Activated B cell treated with CpG ODN at 0.5 μM for 24 hours (primary cell): ENCODE measurements at regions of chr1 and their contacts with region 1.

Region 1: DNA sequence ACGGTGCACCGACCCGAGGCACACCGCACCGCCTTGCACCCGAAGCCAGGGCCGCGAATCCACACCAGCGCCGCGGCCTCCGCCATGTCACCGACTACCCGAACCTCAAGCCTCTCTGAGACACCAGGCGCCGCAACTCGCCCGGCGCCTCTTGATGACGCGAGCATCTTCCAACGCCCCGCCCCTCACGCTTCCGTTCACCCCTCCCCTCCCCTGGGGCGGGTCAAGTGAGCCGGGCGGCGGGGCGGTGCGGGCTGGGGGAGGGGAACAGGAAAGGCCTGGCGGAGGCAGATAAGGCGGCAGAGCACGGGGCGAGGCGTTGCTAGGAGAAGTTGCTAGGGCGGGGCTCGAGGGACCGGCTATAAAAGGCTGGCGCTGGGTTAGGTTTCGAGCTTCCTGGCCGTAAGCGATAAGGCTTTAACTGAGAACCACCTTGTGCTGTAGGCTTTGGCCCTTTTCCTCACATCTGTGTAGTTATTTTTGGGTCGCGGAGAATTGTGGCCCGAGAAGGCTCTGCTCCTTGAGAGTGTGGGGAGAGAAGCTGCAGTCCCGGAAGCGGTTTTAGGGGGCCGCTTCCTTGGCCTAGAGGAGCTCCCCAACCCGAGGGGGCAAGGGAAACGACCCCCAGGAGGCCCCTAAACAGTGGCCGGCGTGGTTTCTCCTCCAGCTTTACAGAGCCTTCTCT is at the start of gene SDE2:
- DNase-seq: peak; percentile 99
- ATAC-seq: peak; percentile 82
- H3K4me3 Mint-ChIP-seq: peak within 1 kb of the TSS; percentile 100
- H3K27ac Mint-ChIP-seq: peak within 1 kb of the TSS; percentile 100
- H3K4me1 Mint-ChIP-seq: peaks cover 81% of the 10 kb centered on the region
- H3K27me3 Mint-ChIP-seq: no peaks in the 10 kb centered on the region
- CTCF ChIP-seq: no peak
- total RNA-seq, gene SDE2: 21.1 and 21.8 TPM in 2 replicates

Region 2: GRCh38 chr1:225467193-225468020 is 532.0 kb before region 1 on chr1:
- CTCF ChIA-PET with region 1: interaction called, 3 read pairs
- POLR2A ChIA-PET with region 1: interaction called, 34 read pairs
- intact Hi-C with region 1: loop called (anchors 1 kb)
- DNase-seq: peak; percentile 75
- ATAC-seq: peak; percentile 86
- H3K4me3 Mint-ChIP-seq: peak overlapping the region; percentile 90
- H3K27ac Mint-ChIP-seq: peak overlapping the region; percentile 98
- H3K4me1 Mint-ChIP-seq: peaks cover 40% of the 10 kb centered on the region
- H3K27me3 Mint-ChIP-seq: no peaks in the 10 kb centered on the region
- CTCF ChIP-seq: no peak

Region 3: DNA sequence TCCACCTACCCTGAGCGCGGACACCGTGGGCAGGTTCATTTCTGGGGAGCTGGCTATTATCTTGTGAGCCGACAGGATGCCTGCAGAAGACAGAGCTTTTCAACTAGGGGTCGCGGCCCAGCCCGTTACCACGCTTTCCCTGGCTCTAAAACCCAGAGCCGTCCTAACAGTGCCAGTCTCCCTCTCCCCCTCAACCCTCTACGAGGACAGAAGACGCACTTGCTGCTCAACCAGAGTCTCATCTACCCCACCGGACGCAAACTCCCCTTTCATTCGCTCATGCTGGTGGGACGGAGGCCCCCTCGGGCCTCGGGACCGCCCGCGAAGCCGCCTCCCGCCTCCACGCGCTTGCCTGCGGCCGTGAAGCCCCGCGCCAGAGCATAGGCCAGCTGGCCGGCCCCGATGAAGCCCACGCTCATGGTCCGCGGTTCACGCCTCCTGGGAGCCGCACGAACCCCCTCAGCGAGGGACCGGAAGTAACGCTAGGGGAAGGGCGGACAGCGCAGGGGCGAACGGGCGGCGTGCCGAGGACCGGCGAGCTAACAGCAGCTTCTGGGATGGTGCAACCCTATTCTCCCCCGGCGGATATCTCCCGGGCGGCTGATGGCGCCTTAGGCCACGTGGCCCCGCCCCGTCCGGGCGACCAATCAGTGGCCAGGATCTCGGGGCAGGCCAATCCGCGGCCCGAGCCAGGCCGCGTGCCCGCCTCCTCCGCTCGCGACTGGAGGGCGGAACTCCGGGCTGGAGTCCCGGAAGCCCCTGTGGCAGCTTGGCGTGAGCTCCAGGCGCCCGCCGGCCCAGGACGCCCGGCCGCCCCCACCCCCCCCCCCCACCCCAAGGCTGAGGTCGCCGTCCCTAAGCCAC is 75.4 kb before region 1 on chr1 and contains the start of gene PYCR2:
- CTCF ChIA-PET with region 1: no interaction called
- POLR2A ChIA-PET with region 1: interaction called, 14 read pairs
- intact Hi-C with region 1: loop called (anchors 1 kb)
- DNase-seq: peak; percentile 93
- ATAC-seq: peak; percentile 98
- H3K4me3 Mint-ChIP-seq: peak within 1 kb of the TSS; percentile 95
- H3K27ac Mint-ChIP-seq: peak within 1 kb of the TSS; percentile 88
- H3K4me1 Mint-ChIP-seq: peaks cover 20% of the 10 kb centered on the region
- H3K27me3 Mint-ChIP-seq: no peaks in the 10 kb centered on the region
- CTCF ChIP-seq: no peak
- total RNA-seq, gene PYCR2: 109 and 110 TPM in 2 replicates

Region 4: DNA sequence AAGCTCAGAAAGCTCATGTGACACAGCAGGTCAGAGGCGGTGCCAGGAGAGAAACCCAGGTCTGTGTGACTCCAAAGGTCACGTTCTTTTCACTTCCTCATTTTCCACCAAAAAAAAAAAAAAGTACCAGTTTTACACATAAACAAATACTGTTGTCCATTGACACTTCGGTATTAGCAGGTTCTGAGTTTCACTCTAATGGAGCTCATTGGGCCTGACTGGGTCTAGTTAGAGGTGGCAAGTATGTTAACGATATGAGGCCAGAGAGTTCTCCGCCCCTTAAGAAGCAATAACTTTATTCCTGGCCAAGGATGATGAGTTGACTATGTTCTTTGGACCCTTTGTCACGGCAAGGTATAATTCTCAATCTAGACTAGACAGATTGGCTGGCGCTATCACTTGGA is 29.7 kb after region 1 on chr1:
- CTCF ChIA-PET with region 1: interaction called, 7 read pairs
- POLR2A ChIA-PET with region 1: interaction called, 139 read pairs
- intact Hi-C with region 1: loop called (anchors 1 kb)
- DNase-seq: peak; percentile 39
- ATAC-seq: peak; percentile 86
- H3K4me3 Mint-ChIP-seq: peak overlapping the region; percentile 68
- H3K27ac Mint-ChIP-seq: peak overlapping the region; percentile 94
- H3K4me1 Mint-ChIP-seq: peaks cover 45% of the 10 kb centered on the region
- H3K27me3 Mint-ChIP-seq: no peaks in the 10 kb centered on the region
- CTCF ChIP-seq: no peak

Region 5: DNA sequence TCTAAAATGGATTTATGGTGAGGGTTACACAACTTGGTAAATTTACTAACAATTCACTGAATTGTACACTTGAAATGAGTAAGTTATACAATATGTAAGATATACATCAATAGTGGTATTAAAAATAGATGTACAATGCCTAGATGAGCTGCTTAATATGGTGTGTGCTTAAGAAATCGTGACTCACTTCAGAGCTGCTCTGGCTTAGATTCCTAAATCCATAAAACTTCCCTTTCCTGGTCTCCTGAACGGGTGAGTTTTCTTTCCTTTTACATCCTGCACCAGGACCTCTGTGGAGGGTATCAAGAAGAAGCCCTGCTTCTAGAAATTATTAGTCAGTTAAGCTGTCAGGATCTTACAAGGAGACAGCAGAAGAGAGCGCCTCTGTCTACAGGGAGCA is 93.6 kb after region 1 on chr1:
- CTCF ChIA-PET with region 1: no interaction called
- POLR2A ChIA-PET with region 1: no interaction called
- intact Hi-C with region 1: no loop called
- DNase-seq: no peak
- ATAC-seq: no peak
- H3K4me3 Mint-ChIP-seq: no peak overlapping the region
- H3K27ac Mint-ChIP-seq: no peak overlapping the region
- H3K4me1 Mint-ChIP-seq: no peaks in the 10 kb centered on the region
- H3K27me3 Mint-ChIP-seq: no peaks in the 10 kb centered on the region
- CTCF ChIP-seq: no peak

Region 6: DNA sequence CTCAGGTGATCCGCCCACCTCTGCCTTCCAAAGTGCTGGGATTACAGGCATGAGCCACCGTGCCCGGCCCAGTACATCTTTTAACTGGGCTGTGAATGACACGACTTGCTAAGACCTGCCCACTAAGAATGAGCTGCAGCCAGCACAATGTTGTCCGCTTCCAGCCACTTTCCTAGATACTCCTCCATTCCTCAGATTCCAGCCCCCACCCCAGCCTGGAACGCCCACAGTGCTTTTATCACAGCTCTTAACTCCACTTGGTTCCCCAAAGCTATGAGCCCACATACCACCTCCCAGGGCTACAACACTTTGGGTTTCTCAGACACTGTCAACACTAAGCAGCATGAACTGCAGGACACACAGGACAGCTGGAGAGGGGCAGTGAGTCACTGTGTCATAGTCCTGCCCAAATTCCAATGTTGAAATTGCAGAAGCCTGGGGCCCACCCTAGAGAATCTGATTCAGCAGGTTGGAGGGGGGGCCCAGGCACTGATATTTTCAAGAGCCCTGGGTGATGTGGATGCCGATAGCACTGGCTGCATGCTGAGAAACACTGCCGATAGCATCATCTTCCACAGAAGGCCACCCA is 129.2 kb after region 1 on chr1:
- CTCF ChIA-PET with region 1: interaction called, 3 read pairs
- POLR2A ChIA-PET with region 1: interaction called, 27 read pairs
- intact Hi-C with region 1: no loop called
- DNase-seq: no peak
- ATAC-seq: no peak
- H3K4me3 Mint-ChIP-seq: peak overlapping the region; percentile 41
- H3K27ac Mint-ChIP-seq: peak overlapping the region; percentile 99
- H3K4me1 Mint-ChIP-seq: peaks cover 96% of the 10 kb centered on the region
- H3K27me3 Mint-ChIP-seq: no peaks in the 10 kb centered on the region
- CTCF ChIP-seq: no peak

Region 7: GRCh38 chr1:226547754-226548191 is 548.4 kb after region 1 on chr1:
- CTCF ChIA-PET with region 1: no interaction called
- POLR2A ChIA-PET with region 1: interaction called, 10 read pairs
- intact Hi-C with region 1: no loop called
- DNase-seq: peak; percentile 52
- ATAC-seq: peak; percentile 71
- H3K4me3 Mint-ChIP-seq: peak overlapping the region; percentile 28
- H3K27ac Mint-ChIP-seq: no peak overlapping the region
- H3K4me1 Mint-ChIP-seq: peaks cover 21% of the 10 kb centered on the region
- H3K27me3 Mint-ChIP-seq: peaks cover 21% of the 10 kb centered on the region
- CTCF ChIP-seq: peak; percentile 50